Left ventricle myocardium inferior (tissue), 1 donor: ENCODE measurements at regions of chr5 and their contacts with region 1.

Region 1: GRCh38 chr5:34656001-34656699 is at the start of gene RAI14:
- DNase-seq: peak; percentile 79
- H3K4me3 ChIP-seq: peak within 1 kb of the TSS; percentile 84
- H3K27ac ChIP-seq: peak within 1 kb of the TSS; percentile 92
- H3K4me1 ChIP-seq: peaks cover 40% of the 10 kb centered on the region
- H3K27me3 ChIP-seq: peaks cover 39% of the 10 kb centered on the region
- CTCF ChIP-seq: peak; percentile 14
- total RNA-seq, gene RAI14: 6.7 TPM

Region 2: DNA sequence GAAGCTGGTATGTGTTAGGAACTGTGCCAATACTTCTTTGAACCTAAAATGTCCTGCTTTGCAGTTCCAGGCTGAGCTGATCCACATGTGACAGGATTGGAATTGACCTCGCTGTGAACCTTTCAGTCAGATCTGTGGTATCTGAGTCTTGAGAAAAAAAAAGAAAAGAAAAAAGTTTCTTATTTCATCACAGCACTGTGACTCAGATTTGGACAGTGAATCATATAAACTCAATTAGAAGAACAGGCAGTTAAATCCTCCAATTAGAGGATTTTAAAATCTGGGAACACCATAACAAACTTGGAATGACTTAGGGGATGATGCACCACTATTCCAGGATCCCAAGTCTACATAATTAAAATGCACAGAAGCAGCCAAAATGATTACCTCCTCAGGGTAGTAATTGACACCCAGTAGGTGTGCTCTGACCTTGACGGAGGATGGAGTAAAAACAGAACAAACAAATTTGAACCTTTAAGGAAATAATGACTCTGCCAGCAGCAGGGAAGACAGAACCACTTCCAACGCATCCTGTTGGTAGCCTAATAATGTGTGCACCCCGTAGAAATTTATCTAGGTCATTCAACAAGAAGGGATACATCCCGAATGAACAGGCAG is 57.9 kb before region 1 on chr5:
- intact Hi-C with region 1: no loop called
- DNase-seq: no peak
- H3K4me3 ChIP-seq: no peak overlapping the region
- H3K27ac ChIP-seq: no peak overlapping the region
- H3K4me1 ChIP-seq: peaks cover 12% of the 10 kb centered on the region
- H3K27me3 ChIP-seq: no peaks in the 10 kb centered on the region
- CTCF ChIP-seq: no peak

Region 3: DNA sequence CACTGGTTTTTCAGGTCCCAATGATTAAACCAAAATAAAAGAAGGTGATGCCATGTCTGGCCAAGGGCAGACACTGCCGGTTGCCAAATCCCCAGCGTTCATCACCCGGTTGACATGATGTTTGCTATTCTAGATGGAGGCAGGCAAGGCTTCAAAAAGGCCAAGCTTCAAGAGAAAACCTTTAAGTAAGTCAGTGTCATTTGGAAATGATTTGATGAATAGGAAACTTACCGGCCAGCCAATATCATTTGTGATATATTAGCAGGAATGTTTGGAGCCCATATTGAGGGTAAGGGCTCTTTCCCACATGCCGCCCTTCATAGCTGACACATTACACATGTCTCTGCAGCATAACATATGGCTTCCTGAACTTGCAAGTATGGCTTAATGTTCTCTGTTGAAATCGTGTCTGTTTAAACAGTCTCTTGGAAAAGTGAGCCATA is 93.3 kb after region 1 on chr5:
- intact Hi-C with region 1: no loop called
- DNase-seq: no peak
- H3K4me3 ChIP-seq: no peak overlapping the region
- H3K27ac ChIP-seq: no peak overlapping the region
- H3K4me1 ChIP-seq: no peaks in the 10 kb centered on the region
- H3K27me3 ChIP-seq: no peaks in the 10 kb centered on the region
- CTCF ChIP-seq: no peak

Region 4: DNA sequence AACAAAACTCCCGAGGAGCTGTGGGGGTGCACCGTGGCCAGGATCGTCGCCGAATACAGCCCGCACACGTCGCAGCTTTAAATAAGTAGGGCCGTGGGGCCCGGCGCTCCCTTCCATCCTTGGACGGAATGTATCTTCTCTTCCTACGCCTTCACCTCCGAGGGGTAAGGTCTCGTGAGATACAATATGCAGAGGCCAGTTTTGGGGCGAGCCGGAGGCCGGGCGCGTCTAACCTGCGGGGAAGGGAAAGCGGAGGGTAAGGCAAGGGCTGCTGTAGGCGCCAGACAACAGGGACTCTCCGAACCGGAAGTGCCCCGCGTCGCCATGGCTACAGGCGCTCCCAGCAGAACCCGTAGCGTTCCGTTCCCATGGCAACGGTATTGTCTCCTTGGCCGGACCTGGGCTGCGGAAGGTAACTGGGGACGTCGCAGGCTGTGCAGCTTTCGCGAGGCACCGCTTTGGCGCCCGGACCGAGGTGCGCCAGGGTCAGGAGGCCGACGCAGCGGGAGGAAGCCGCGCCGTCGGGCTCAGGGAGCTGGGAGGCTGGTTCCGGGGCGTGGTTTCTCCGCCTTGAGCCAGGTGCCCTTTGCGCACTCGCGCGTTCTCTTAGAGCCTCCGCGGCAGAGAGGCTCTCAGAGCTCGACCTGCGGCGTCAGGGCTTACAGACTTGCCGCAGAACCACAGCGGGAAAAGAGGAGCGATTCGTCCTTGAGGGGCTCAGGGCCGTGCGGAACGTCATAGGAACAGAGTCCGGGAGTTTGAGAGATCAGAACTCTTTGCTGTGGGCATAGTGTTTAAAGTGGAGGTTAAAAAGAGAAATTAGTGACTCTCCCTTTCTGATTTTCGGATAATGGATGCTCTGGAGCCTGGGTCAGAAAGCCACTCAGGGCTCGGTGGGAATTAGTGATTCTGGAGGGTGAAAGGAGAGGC is 182.9 kb after region 1 on chr5 and contains the start of gene TTC23L:
- intact Hi-C with region 1: loop called (anchors 10 kb)
- DNase-seq: peak; percentile 86
- H3K4me3 ChIP-seq: peak within 1 kb of the TSS; percentile 78
- H3K27ac ChIP-seq: peak within 1 kb of the TSS; percentile 21
- H3K4me1 ChIP-seq: peaks cover 13% of the 10 kb centered on the region
- H3K27me3 ChIP-seq: no peaks in the 10 kb centered on the region
- CTCF ChIP-seq: no peak
- total RNA-seq, gene TTC23L: not detected

Region 5: GRCh38 chr5:34898258-34898895 is 242.2 kb after region 1 on chr5:
- intact Hi-C with region 1: no loop called
- DNase-seq: peak; percentile 36
- H3K4me3 ChIP-seq: no peak overlapping the region
- H3K27ac ChIP-seq: no peak overlapping the region
- H3K4me1 ChIP-seq: no peaks in the 10 kb centered on the region
- H3K27me3 ChIP-seq: no peaks in the 10 kb centered on the region
- CTCF ChIP-seq: peak; percentile 92